Activated CD4-positive, alpha-beta memory T cell treated with anti-CD3 and anti-CD28 coated beads for 36 hours (primary cell): ENCODE measurements at regions of chr13 and their contacts with region 1.

Region 1: GRCh38 chr13:31742097-31742734 is 2.9 kb downstream of the RXFP2 start:
- DNase-seq: peak; percentile 70
- H3K4me3 Mint-ChIP-seq: no peak overlapping the region
- H3K27ac Mint-ChIP-seq: no peak overlapping the region
- H3K4me1 Mint-ChIP-seq: peaks cover 4% of the 10 kb centered on the region
- H3K27me3 Mint-ChIP-seq: peaks cover 6% of the 10 kb centered on the region

Region 2: GRCh38 chr13:30845297-30846214 is 896.7 kb before region 1 on chr13:
- CTCF ChIA-PET with region 1: no interaction called
- POLR2A ChIA-PET with region 1: no interaction called
- intact Hi-C with region 1: no loop called
- DNase-seq: no peak
- H3K4me3 Mint-ChIP-seq: no peak overlapping the region
- H3K27ac Mint-ChIP-seq: no peak overlapping the region
- H3K4me1 Mint-ChIP-seq: peaks cover 23% of the 10 kb centered on the region
- H3K27me3 Mint-ChIP-seq: peaks cover 4% of the 10 kb centered on the region

Region 3: DNA sequence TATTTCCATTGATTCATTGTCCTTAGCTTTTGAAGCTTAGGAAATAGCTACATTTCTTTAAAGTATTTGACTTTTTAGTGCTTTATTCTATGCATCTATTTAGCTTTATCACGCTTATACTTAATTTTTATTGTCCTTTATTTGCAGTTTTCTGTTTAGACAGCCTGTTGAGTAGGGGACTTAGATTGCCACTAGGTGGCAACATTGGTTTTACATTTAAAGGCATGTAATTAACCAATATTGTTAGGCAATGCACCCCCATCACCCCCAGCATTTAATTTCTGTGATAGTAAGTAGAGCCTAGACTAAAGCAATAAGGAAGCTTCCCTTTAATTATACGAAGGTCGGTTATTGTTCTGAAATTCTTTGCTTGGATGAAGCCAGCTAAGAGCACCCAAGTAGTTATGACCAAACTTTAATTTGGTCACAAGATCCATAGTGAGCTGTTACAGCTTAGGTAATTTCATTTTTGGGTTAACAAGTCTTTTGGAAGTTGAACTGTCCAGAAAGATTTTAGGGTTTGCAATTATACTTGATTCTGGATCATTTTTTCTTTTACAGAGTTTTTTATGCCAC is 505.9 kb before region 1 on chr13:
- CTCF ChIA-PET with region 1: interaction called, 6 read pairs
- POLR2A ChIA-PET with region 1: no interaction called
- intact Hi-C with region 1: loop called (anchors 10 kb)
- DNase-seq: no peak
- H3K4me3 Mint-ChIP-seq: no peak overlapping the region
- H3K27ac Mint-ChIP-seq: no peak overlapping the region
- H3K4me1 Mint-ChIP-seq: no peaks in the 10 kb centered on the region
- H3K27me3 Mint-ChIP-seq: no peaks in the 10 kb centered on the region

Region 4: GRCh38 chr13:31431722-31432137 is 310.5 kb before region 1 on chr13:
- CTCF ChIA-PET with region 1: interaction called, 11 read pairs
- POLR2A ChIA-PET with region 1: no interaction called
- intact Hi-C with region 1: loop called (anchors 1 kb)
- DNase-seq: peak; percentile 64
- H3K4me3 Mint-ChIP-seq: no peak overlapping the region
- H3K27ac Mint-ChIP-seq: no peak overlapping the region
- H3K4me1 Mint-ChIP-seq: no peaks in the 10 kb centered on the region
- H3K27me3 Mint-ChIP-seq: peaks cover 2% of the 10 kb centered on the region

Region 5: GRCh38 chr13:31717583-31717982 is 24.6 kb before region 1 on chr13:
- CTCF ChIA-PET with region 1: no interaction called
- POLR2A ChIA-PET with region 1: no interaction called
- intact Hi-C with region 1: no loop called
- DNase-seq: no peak
- H3K4me3 Mint-ChIP-seq: no peak overlapping the region
- H3K27ac Mint-ChIP-seq: no peak overlapping the region
- H3K4me1 Mint-ChIP-seq: no peaks in the 10 kb centered on the region
- H3K27me3 Mint-ChIP-seq: peaks cover 3% of the 10 kb centered on the region

Region 6: DNA sequence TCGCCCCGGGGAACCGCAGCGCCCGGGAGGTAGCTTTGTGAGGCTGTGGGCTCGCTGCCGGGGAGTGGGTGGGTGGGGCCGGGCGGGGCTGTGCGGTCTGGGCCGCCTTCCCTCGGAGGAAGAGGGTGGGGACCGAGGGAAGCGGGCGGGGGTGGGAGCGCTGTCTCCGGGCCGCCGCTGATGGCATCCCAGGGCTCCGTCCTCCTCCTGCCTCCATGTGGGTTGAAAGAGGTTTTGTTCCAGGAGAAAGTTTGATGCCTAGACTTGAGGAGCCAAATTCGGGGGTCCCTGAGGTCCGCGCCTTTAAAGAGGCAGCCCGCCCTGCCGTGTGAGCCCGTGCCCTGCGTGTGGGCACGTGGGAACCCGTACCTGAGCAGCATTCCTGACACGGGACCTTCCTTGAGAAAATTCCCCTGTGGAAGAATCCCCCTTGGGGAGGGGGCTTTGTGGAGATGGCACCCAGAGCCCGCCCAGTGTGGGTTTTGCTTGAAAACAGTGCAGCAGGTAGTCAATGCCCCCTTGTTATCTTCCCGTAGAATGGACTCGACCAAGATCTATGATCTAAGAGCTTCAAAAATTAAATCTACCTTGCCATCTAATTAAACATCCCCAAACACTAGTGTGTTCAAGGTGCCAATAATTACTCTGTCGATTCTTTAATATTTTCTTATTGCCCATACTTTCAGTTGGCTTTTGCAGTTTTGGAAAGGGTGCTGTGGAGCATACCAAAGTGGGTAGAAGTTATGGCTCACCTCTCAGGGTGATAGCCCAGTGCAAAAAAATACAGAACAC is 104.9 kb after region 1 on chr13:
- CTCF ChIA-PET with region 1: no interaction called
- POLR2A ChIA-PET with region 1: no interaction called
- intact Hi-C with region 1: no loop called
- DNase-seq: no peak
- H3K4me3 Mint-ChIP-seq: peak overlapping the region; percentile 65
- H3K27ac Mint-ChIP-seq: no peak overlapping the region
- H3K4me1 Mint-ChIP-seq: peaks cover 13% of the 10 kb centered on the region
- H3K27me3 Mint-ChIP-seq: peaks cover 20% of the 10 kb centered on the region